ENCODE measurements at regions of chr14 and their contacts with region 1.

Region 1: DNA sequence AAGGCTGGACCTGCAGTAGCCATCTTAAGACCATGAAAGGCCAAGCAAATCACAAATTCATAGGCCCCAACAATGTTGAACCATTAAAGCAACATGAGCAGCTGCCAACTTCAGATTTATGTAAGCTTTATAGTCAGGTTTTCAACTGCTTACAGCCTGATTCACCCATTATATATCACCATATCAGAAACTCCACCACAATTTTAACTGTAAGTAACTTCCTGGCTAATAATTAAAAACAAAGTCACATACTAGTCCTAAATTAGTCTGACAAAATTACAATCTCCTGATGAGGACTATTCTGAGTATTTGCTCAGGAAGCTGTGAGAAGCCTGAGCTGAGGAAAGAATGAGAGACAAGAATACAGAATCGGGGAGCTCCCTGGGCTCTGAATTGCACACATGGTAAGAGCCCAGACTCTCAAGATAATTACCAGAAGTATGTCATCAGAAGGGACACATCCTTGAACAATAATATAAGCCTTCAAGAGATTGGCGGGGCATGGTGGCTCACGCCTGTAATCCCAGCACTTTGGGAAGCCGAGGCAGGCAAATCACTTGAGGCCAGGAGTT is 55.1 kb downstream of the NUMB start:
- DNase-seq: no peak
- ATAC-seq: no peak
- H3K4me3 ChIP-seq: no peak overlapping the region
- H3K27ac ChIP-seq: no peak overlapping the region
- H3K4me1 ChIP-seq: peaks cover 0 to 19% (median 10%) of the 10 kb centered on the region in 12 donors
- H3K27me3 ChIP-seq: no peaks in the 10 kb centered on the region
- CTCF ChIP-seq: no peak
- POLR2A ChIP-seq: no peak

Region 2: GRCh38 chr14:73364559-73364958 is 38.7 kb before region 1 on chr14:
- intact Hi-C with region 1: loop called in 1 of 10 experiments (anchors 5 kb)
- DNase-seq: no peak
- ATAC-seq: no peak
- H3K4me3 ChIP-seq: no peak overlapping the region
- H3K27ac ChIP-seq: no peak overlapping the region
- H3K4me1 ChIP-seq: peaks cover 0 to 10% (median 1%) of the 10 kb centered on the region in 12 donors
- H3K27me3 ChIP-seq: no peaks in the 10 kb centered on the region
- CTCF ChIP-seq: no peak
- POLR2A ChIP-seq: no peak